ENCODE measurements at regions of chr12 and their contacts with region 1.

Region 1: GRCh38 chr12:22670762-22671161 is 45.8 kb downstream of the ETNK1 start:
- DNase-seq: no peak
- H3K4me3 ChIP-seq: no peak overlapping the region
- H3K27ac ChIP-seq: no peak overlapping the region
- H3K4me1 ChIP-seq: no peaks in the 10 kb centered on the region
- H3K27me3 ChIP-seq: no peaks in the 10 kb centered on the region
- CTCF ChIP-seq: peak; percentile 24 to 25

Region 2: DNA sequence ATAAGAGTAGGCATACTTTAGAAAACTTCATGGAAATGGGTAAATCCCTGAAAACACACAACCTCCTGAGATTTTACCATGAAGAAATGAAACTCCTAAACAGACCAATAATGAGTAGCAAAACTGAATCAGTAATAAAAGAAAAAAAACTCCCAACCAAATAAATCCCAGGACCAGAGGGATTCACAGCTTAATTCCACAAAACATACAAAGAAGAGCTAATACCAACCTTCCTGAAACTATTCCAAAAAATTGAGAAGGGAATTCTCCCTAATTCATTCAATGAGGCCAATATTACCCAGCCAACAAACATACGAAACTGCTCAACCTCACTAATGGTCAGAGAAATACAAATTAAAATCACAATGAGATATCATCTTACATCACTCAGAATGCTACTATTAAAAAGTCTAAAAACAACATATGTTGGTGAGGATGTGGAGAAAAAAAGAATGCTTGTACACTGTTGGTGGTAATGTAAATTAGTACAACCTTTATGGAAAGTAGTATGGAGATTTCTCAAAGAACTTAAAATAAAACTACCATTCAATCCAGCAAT is 239.0 kb before region 1 on chr12:
- CTCF ChIA-PET with region 1: no interaction called
- dilution Hi-C with region 1: no loop called
- in situ Hi-C with region 1: no loop called
- intact Hi-C with region 1: no loop called
- DNase-seq: no peak
- H3K4me3 ChIP-seq: no peak overlapping the region
- H3K27ac ChIP-seq: no peak overlapping the region
- H3K4me1 ChIP-seq: peaks cover 8% of the 10 kb centered on the region
- H3K27me3 ChIP-seq: no peaks in the 10 kb centered on the region
- CTCF ChIP-seq: no peak

Region 3: GRCh38 chr12:22529281-22530060 is 141.3 kb before region 1 on chr12:
- CTCF ChIA-PET with region 1: no interaction called
- dilution Hi-C with region 1: no loop called
- in situ Hi-C with region 1: no loop called
- intact Hi-C with region 1: loop called (anchors 2 kb)
- DNase-seq: peak; percentile 51
- H3K4me3 ChIP-seq: no peak overlapping the region
- H3K27ac ChIP-seq: no peak overlapping the region
- H3K4me1 ChIP-seq: peaks cover 8% of the 10 kb centered on the region
- H3K27me3 ChIP-seq: no peaks in the 10 kb centered on the region
- CTCF ChIP-seq: peak; percentile 62 to 64

Region 4: GRCh38 chr12:22615963-22616501 is 54.7 kb before region 1 on chr12:
- CTCF ChIA-PET with region 1: no interaction called
- dilution Hi-C with region 1: no loop called
- in situ Hi-C with region 1: no loop called
- intact Hi-C with region 1: no loop called
- DNase-seq: no peak
- H3K4me3 ChIP-seq: no peak overlapping the region
- H3K27ac ChIP-seq: no peak overlapping the region
- H3K4me1 ChIP-seq: no peaks in the 10 kb centered on the region
- H3K27me3 ChIP-seq: no peaks in the 10 kb centered on the region
- CTCF ChIP-seq: no peak

Region 5: GRCh38 chr12:22728989-22729388 is 58.2 kb after region 1 on chr12:
- CTCF ChIA-PET with region 1: no interaction called
- dilution Hi-C with region 1: no loop called
- in situ Hi-C with region 1: no loop called
- intact Hi-C with region 1: no loop called
- DNase-seq: no peak
- H3K4me3 ChIP-seq: no peak overlapping the region
- H3K27ac ChIP-seq: no peak overlapping the region
- H3K4me1 ChIP-seq: no peaks in the 10 kb centered on the region
- H3K27me3 ChIP-seq: no peaks in the 10 kb centered on the region
- CTCF ChIP-seq: no peak

Measured in mammary epithelial cell (primary cell).